ENCODE measurements at regions of chr9 and their contacts with region 1.

Region 1: GRCh38 chr9:35646533-35647265 is 4.0 kb downstream of the SIT1 start:
- DNase-seq: peak; percentile 83 to 96 (median 88)
- ATAC-seq: peak; percentile 83
- H3K4me3 ChIP-seq: peak overlapping the region; percentile 72
- H3K4me3 Mint-ChIP-seq: peak overlapping the region; percentile 94
- H3K27ac ChIP-seq: peak overlapping the region; percentile 80 to 82
- H3K27ac Mint-ChIP-seq: peak overlapping the region; percentile 94
- H3K4me1 ChIP-seq: peaks cover 78% of the 10 kb centered on the region
- H3K4me1 Mint-ChIP-seq: peaks cover 73% of the 10 kb centered on the region
- H3K27me3 ChIP-seq: no peaks in the 10 kb centered on the region
- H3K27me3 Mint-ChIP-seq: no peaks in the 10 kb centered on the region
- CTCF ChIP-seq: peak; percentile 96

Region 2: GRCh38 chr9:35611230-35611797 is 35.4 kb before region 1 on chr9:
- CTCF ChIA-PET with region 1: interaction called, 31 read pairs
- POLR2A ChIA-PET with region 1: interaction called, 45 read pairs
- intact Hi-C with region 1: no loop called
- DNase-seq: peak; percentile 33 to 81 (median 47)
- ATAC-seq: peak; percentile 98
- H3K4me3 ChIP-seq: no peak overlapping the region
- H3K4me3 Mint-ChIP-seq: peak overlapping the region; percentile 5
- H3K27ac ChIP-seq: no peak overlapping the region
- H3K27ac Mint-ChIP-seq: no peak overlapping the region
- H3K4me1 ChIP-seq: peaks cover 26% of the 10 kb centered on the region
- H3K4me1 Mint-ChIP-seq: peaks cover 32% of the 10 kb centered on the region
- H3K27me3 ChIP-seq: no peaks in the 10 kb centered on the region
- H3K27me3 Mint-ChIP-seq: no peaks in the 10 kb centered on the region
- CTCF ChIP-seq: peak; percentile 60

Region 3: DNA sequence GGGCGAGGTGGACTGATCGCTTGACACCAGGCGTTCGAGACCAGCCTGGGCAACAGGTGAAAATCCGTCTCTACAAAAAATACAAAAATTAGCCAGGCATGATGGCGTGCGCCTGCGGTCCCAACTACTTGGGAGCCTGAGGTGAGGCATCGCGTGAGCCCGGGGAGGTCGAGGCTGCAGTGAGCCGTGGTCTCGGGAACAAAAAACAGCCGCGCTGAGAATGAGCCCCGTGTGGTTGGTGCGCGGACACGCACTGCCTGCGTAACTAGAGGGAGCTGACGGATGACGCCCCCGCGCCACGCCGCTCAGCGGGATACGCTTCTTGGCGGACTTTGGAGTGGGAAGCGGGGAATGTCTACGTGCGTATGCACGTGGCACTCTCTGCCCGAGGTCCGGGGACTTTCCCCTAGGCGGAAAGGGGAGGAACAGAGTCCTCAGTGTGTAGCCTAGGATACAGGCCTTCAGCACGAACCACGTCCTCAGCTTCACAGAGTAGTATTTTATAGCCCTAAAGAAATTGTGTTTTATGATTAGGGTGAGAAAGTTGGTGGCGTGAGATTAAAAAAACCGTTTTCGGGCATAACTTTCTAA is 10.9 kb after region 1 on chr9 and contains the start of gene RMRP:
- CTCF ChIA-PET with region 1: interaction called, 94 read pairs
- POLR2A ChIA-PET with region 1: interaction called, 175 read pairs
- intact Hi-C with region 1: loop called (anchors 1 kb)
- DNase-seq: peak; percentile 63 to 97 (median 77)
- ATAC-seq: peak; percentile 75
- H3K4me3 ChIP-seq: peak within 1 kb of the TSS; percentile 88
- H3K4me3 Mint-ChIP-seq: peak within 1 kb of the TSS; percentile 96
- H3K27ac ChIP-seq: peak within 1 kb of the TSS; percentile 99 to 100
- H3K27ac Mint-ChIP-seq: peak within 1 kb of the TSS; percentile 100
- H3K4me1 ChIP-seq: peaks cover 73% of the 10 kb centered on the region
- H3K4me1 Mint-ChIP-seq: peaks cover 69% of the 10 kb centered on the region
- H3K27me3 ChIP-seq: no peaks in the 10 kb centered on the region
- H3K27me3 Mint-ChIP-seq: peaks cover 8% of the 10 kb centered on the region
- CTCF ChIP-seq: no peak
- total RNA-seq, gene RMRP: 14,857 to 24,615 TPM

Region 4: GRCh38 chr9:35675732-35676392 is 29.2 kb after region 1 on chr9:
- CTCF ChIA-PET with region 1: no interaction called
- POLR2A ChIA-PET with region 1: interaction called, 11 read pairs
- intact Hi-C with region 1: no loop called
- DNase-seq: peak in 5 of 14 experiments; percentile 13 to 59 (median 36)
- ATAC-seq: peak; percentile 60
- H3K4me3 ChIP-seq: peak overlapping the region; percentile 58
- H3K4me3 Mint-ChIP-seq: peak overlapping the region; percentile 80
- H3K27ac ChIP-seq: no peak overlapping the region
- H3K27ac Mint-ChIP-seq: no peak overlapping the region
- H3K4me1 ChIP-seq: peaks cover 15% of the 10 kb centered on the region
- H3K4me1 Mint-ChIP-seq: peaks cover 15% of the 10 kb centered on the region
- H3K27me3 ChIP-seq: peaks cover 0 to 6% of the 10 kb centered on the region in 2 experiments
- H3K27me3 Mint-ChIP-seq: peaks cover 10% of the 10 kb centered on the region
- CTCF ChIP-seq: no peak

Region 5: DNA sequence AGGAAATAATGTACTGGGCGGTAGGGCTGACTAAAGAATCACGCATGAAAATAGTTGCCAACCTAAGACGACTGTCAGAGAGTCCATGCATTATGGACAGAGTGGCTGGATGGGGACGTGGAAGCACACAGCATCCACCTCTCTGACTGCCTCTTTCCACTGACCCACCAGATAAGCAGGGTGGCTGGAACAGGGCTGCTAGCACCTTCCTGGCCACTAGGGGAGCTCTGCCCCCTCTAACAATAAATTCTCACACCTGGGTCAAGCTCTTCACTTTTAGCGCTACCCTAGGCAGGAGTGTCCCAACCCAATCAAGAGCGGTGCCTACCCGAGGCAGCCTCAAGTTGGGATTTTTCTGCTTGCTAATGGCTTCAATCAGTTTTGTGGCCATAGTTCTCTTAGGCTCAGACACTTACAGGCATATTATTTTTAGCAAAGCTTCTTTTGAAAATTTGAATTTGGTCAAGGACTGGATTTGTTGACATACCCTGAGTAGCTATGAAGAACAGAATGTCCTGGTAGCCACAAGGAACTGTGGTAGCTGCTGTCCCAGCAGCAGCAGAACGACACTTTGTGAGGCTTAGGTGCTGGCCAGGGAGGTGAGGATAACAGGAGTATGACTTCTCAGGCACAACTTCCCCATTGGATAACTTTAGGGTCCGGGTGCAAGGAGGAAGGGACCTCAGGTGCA is 50.0 kb after region 1 on chr9:
- CTCF ChIA-PET with region 1: interaction called, 32 read pairs
- POLR2A ChIA-PET with region 1: interaction called, 14 read pairs
- intact Hi-C with region 1: loop called (anchors 1 to 2 kb)
- DNase-seq: peak; percentile 29 to 78 (median 46)
- ATAC-seq: peak; percentile 94
- H3K4me3 ChIP-seq: no peak overlapping the region
- H3K4me3 Mint-ChIP-seq: no peak overlapping the region
- H3K27ac ChIP-seq: no peak overlapping the region
- H3K27ac Mint-ChIP-seq: peak overlapping the region; percentile 24
- H3K4me1 ChIP-seq: peaks cover 10% of the 10 kb centered on the region
- H3K4me1 Mint-ChIP-seq: peaks cover 18% of the 10 kb centered on the region
- H3K27me3 ChIP-seq: no peaks in the 10 kb centered on the region
- H3K27me3 Mint-ChIP-seq: no peaks in the 10 kb centered on the region
- CTCF ChIP-seq: peak; percentile 97

Region 6: DNA sequence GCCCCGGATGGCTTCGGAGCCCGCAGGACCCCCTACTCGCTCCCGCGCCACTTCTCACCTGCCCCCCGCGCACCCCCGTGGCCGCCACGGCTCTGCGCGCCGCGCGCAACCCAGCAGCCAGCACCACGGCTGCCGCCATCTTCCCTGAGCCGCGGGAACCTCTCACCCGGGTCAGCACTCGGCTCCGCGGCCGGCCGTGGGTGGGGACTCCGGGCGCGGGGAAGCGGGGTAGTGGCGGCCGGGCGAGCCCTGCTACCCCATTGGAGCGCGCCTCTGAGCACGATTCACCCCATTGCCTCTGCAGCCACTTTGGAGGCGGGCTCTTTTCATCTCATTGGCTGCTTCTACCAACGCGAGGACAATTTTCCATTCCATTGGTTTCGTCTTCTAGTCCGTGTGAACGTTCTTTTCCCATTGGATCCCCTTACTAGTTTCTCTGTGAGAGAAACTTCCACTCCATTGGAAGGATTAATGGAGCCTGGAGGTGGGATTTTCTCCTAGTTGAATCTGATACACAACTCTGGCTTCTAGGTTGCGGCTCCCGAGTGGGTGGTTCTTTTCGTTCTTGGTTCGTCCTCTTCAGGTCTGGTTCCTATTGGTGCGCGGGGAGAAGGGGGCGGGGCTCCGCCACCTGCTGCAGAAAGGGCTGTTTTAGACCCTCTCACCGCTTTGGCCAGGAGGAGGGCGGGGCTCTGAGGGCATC is 168.3 kb after region 1 on chr9 and contains the start of gene HINT2:
- CTCF ChIA-PET with region 1: no interaction called
- POLR2A ChIA-PET with region 1: interaction called, 5 read pairs
- intact Hi-C with region 1: loop called (anchors 2 to 5 kb)
- DNase-seq: peak; percentile 93 to 99 (median 96)
- ATAC-seq: peak; percentile 79
- H3K4me3 ChIP-seq: peak within 1 kb of the TSS; percentile 80
- H3K4me3 Mint-ChIP-seq: peak within 1 kb of the TSS; percentile 91
- H3K27ac ChIP-seq: peak within 1 kb of the TSS; percentile 68 to 87
- H3K27ac Mint-ChIP-seq: peak within 1 kb of the TSS; percentile 91
- H3K4me1 ChIP-seq: peaks cover 42% of the 10 kb centered on the region
- H3K4me1 Mint-ChIP-seq: peaks cover 43% of the 10 kb centered on the region
- H3K27me3 ChIP-seq: no peaks in the 10 kb centered on the region
- H3K27me3 Mint-ChIP-seq: no peaks in the 10 kb centered on the region
- CTCF ChIP-seq: no peak
- total RNA-seq, gene HINT2: 10.9 to 12.6 TPM

Measured in CD4-positive, alpha-beta T cell (primary cell).